Activated CD8-positive, alpha-beta T cell treated with anti-CD3 and anti-CD28 coated beads, Interleukin-2, amount 10 ng/mL, durations not matched to agents 7 days and 5 days (primary cell): ENCODE measurements at regions of chr1 and their contacts with region 1.

Region 1: DNA sequence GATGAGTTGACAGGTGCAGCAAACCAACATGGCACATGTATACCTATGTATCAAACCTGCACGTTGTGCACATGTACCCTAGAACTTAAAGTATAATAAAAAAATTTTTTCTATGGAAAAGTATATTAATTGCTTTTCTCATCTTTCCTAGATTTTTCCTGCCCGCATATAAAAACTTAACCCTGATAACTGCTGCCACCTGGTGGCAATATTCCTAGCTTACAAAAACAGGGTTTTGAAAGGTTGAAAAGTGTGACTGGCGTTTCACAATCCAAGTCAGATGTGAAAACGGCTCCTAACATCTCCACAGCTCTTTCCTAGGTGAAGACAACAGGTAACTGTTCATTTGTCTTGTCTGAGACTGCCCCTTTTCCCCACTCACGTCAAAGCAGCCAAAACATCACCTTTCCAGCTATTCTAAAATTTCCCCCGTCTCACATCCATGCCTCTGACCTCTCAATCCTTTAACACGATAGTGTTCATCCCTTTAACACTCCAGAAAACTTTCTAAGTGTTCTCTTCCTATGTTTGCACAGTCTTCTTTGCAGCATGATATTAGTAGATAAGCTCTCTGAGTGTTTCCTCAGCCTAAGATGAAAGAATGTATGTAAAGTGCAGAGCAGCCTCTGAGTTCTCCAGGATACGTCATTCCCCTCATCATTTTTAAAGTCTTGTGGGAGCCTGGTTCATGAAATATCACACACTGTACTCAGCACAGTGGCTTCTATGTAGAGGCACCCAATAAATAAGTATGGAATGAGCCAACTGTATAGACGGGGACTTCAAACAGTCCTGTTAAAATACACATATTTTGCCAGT is 27.5 kb downstream of the OVGP1 start:
- DNase-seq: peak; percentile 63
- ATAC-seq: no peak
- H3K4me3 Mint-ChIP-seq: no peak overlapping the region
- H3K27ac Mint-ChIP-seq: no peak overlapping the region
- H3K4me1 Mint-ChIP-seq: peaks cover 4% of the 10 kb centered on the region
- H3K27me3 Mint-ChIP-seq: peaks cover 41% of the 10 kb centered on the region

Region 2: GRCh38 chr1:111197598-111198284 is 202.3 kb before region 1 on chr1:
- CTCF ChIA-PET with region 1: interaction called, 14 read pairs
- POLR2A ChIA-PET with region 1: interaction called, 6 read pairs
- DNase-seq: peak; percentile 76
- ATAC-seq: peak; percentile 46
- H3K4me3 Mint-ChIP-seq: peak overlapping the region; percentile 99
- H3K27ac Mint-ChIP-seq: peak overlapping the region; percentile 99
- H3K4me1 Mint-ChIP-seq: peaks cover 62% of the 10 kb centered on the region
- H3K27me3 Mint-ChIP-seq: no peaks in the 10 kb centered on the region

Region 3: DNA sequence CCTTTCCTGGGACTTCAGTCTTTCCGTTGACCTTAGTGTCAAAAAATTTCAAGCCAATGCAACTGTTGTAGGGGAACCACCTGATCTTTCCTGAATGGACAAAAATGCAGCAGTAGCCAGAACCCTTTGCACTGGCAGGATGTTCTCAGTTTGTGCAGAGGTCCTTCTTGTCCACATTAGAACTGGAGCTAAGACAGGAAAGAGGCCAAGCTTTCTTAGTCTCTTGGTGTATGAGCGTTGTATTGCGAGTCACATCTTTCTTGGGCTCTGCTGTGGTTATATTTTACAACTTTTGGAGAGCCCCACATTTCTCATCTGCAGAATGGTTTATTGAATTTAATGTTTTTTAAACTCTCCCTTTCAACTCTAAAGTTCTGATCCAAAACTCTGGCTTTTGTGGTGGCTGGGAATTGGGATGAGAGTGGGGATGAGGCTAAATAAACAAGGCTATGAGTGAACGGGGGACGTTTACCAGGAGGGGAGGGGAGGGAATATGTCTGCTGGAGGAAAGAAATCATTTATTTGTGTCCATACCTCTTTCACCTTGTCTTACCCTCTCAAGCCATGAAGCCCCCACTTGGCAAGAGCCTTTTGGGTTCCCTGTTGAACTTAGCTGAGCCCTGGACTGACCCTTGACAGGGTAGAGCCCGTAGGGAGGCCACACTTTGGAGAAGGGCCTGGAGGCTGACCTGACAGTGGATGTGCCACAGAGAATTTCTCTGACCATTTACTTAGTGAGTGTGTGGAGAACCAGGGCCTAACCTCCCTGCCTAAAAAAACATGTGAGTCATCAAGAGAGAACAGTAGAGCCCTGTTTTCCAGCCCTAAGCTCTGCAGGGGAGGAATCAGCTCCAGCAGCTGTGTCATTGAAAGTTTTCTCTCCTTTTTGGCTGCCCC is 171.9 kb before region 1 on chr1:
- CTCF ChIA-PET with region 1: interaction called, 36 read pairs
- POLR2A ChIA-PET with region 1: no interaction called
- DNase-seq: no peak
- ATAC-seq: no peak
- H3K4me3 Mint-ChIP-seq: peak overlapping the region; percentile 16
- H3K27ac Mint-ChIP-seq: peak overlapping the region; percentile 72
- H3K4me1 Mint-ChIP-seq: peaks cover 79% of the 10 kb centered on the region
- H3K27me3 Mint-ChIP-seq: no peaks in the 10 kb centered on the region

Region 4: DNA sequence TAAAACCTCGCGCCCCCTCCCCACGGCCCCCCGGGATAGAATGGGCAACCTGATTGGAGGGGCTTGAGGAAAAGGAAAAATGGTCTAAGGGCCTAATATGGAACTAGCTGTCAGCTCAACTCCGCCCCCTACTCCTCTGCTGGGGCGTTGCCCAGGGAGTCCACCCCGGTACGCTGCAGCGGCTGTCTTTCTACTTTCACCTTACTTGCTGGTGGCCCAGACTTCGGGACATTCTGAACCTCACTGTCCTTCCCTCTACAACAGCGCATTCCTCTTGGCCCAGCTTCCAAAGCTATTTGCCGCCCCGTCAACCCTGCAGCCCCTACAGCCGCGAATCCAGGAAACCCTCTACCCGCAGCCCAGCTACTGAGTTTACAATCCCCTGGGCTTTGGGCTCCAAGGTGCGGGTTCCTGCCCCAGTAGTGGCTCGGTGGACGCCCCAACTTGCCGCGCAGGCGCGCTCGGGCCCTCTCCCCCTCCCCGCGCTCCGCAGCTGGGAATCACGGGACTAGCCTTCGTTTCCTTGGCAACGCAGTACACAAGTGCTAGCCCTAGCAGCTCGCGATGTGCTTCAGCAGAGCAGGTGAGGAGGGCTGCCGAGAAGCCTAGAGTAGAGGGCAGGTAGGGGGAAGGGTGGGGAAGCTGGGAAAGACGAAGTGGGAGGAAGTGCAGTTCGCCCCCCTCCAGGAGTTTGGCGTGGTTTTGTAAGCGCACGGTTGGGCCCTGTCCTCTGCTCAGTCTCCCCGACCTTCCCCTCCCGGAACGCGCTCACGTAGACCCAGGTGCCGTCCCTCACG is 53.7 kb before region 1 on chr1:
- CTCF ChIA-PET with region 1: interaction called, 14 read pairs
- POLR2A ChIA-PET with region 1: no interaction called
- DNase-seq: peak; percentile 84
- ATAC-seq: peak; percentile 92
- H3K4me3 Mint-ChIP-seq: peak overlapping the region; percentile 83
- H3K27ac Mint-ChIP-seq: peak overlapping the region; percentile 70
- H3K4me1 Mint-ChIP-seq: peaks cover 20% of the 10 kb centered on the region
- H3K27me3 Mint-ChIP-seq: no peaks in the 10 kb centered on the region

Region 5: DNA sequence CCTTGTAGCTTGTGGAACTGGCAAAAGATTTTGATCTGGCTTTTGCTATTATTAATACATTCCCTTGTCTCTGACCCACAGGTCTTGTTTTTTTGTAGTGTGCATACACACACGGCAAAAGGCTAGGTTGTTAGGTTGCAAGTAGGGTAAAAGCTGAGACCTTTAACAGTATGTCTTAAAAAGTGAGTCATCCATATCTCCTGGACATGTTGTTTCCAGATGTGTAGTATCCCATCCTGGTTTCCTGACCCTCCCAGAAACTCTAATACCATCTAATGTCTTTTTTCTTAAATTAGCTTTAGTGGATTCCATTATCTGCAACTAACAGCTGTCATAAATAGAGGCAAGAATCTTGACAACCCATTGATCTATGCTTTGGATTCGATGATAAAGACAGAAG is 12.8 kb after region 1 on chr1:
- CTCF ChIA-PET with region 1: interaction called, 10 read pairs
- POLR2A ChIA-PET with region 1: no interaction called
- DNase-seq: no peak
- ATAC-seq: no peak
- H3K4me3 Mint-ChIP-seq: no peak overlapping the region
- H3K27ac Mint-ChIP-seq: no peak overlapping the region
- H3K4me1 Mint-ChIP-seq: peaks cover 3% of the 10 kb centered on the region
- H3K27me3 Mint-ChIP-seq: peaks cover 12% of the 10 kb centered on the region

Region 6: GRCh38 chr1:111441573-111442192 is 41.7 kb after region 1 on chr1:
- CTCF ChIA-PET with region 1: interaction called, 10 read pairs
- POLR2A ChIA-PET with region 1: no interaction called
- DNase-seq: peak; percentile 78
- ATAC-seq: peak; percentile 80
- H3K4me3 Mint-ChIP-seq: no peak overlapping the region
- H3K27ac Mint-ChIP-seq: peak overlapping the region; percentile 56
- H3K4me1 Mint-ChIP-seq: peaks cover 48% of the 10 kb centered on the region
- H3K27me3 Mint-ChIP-seq: no peaks in the 10 kb centered on the region